HEK293T (cell line): ENCODE measurements at regions of chr3 and their contacts with region 1.

Region 1: DNA sequence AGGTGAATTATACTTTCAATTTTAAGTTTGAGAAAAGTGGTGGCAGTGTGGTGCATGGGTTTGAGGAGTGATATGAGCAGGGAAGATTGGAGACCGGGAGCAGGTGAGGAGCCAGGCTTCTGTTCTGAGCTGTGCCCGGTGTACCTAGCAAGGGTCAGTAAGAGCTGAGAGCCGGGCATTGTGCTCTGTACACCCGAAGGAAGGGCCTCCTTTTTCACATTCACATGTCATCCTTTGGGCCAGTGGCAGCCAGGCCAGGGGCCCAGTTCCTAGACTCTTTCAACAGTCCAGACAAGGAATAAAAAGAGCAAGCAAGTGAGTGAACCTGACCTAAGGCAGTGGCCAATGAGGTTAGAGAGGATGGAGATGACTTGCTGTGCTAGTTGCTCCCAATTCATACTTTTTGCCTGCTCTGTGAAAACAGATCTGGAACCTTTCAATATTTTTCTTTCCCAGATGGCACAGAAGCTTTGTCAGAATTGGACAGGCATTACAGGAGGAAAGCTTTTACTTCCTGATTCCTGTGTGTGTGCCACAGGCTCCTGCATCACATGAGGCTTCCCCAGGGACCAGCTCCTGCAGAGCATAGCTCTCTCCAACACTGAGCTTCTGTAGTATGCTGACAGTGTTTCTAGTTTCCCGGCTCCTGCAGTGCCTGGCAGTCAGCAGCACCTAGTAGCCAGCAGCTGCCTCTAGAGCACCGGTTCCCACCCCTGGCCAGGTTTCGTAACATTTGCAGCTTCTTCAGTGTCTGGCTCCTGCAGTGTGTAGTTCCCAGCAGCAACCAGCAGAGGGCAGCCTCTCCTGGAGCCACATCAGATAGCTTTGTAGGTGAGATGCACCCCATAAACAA is 5.3 kb upstream of the TRA2B start:
- DNase-seq: peak; percentile 66

Region 2: GRCh38 chr3:185585859-185586685 is 357.1 kb before region 1 on chr3 and contains the start of gene SENP2:
- CTCF ChIA-PET with region 1: no interaction called
- POLR2A ChIA-PET with region 1: no interaction called
- DNase-seq: peak; percentile 89

Region 3: DNA sequence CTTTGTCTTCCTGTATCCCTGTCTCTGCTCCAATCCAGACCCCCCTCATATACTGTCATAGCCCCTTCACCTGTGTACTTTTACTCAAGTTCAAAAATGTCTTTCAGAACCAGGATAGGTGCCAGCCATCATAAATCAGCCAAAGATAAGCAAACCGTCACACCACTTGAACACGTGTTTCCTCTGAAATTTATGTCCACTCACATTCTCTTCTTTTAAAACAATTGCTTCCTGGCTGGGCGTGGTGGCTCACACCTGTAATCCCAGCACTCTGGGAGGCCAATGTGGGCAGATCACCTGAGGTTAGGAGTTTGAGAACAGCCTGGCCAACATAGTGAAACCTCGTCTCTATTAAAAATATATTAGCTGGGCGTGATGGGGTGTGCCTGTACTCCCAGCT is 192.4 kb before region 1 on chr3:
- CTCF ChIA-PET with region 1: no interaction called
- POLR2A ChIA-PET with region 1: no interaction called
- DNase-seq: no peak

Region 4: GRCh38 chr3:185928496-185928895 is 14.6 kb before region 1 on chr3:
- CTCF ChIA-PET with region 1: interaction called, 11 read pairs
- POLR2A ChIA-PET with region 1: interaction called, 27 read pairs
- DNase-seq: no peak

Region 5: GRCh38 chr3:185956244-185956643 is 13.1 kb after region 1 on chr3:
- CTCF ChIA-PET with region 1: interaction called, 34 read pairs
- POLR2A ChIA-PET with region 1: interaction called, 3 read pairs
- DNase-seq: no peak

Region 6: GRCh38 chr3:185968168-185968567 is 25.0 kb after region 1 on chr3:
- CTCF ChIA-PET with region 1: interaction called, 10 read pairs
- POLR2A ChIA-PET with region 1: interaction called, 5 read pairs
- DNase-seq: no peak

Region 7: GRCh38 chr3:185983495-185984141 is 40.5 kb after region 1 on chr3:
- CTCF ChIA-PET with region 1: no interaction called
- POLR2A ChIA-PET with region 1: no interaction called
- DNase-seq: peak; percentile 77

Region 8: DNA sequence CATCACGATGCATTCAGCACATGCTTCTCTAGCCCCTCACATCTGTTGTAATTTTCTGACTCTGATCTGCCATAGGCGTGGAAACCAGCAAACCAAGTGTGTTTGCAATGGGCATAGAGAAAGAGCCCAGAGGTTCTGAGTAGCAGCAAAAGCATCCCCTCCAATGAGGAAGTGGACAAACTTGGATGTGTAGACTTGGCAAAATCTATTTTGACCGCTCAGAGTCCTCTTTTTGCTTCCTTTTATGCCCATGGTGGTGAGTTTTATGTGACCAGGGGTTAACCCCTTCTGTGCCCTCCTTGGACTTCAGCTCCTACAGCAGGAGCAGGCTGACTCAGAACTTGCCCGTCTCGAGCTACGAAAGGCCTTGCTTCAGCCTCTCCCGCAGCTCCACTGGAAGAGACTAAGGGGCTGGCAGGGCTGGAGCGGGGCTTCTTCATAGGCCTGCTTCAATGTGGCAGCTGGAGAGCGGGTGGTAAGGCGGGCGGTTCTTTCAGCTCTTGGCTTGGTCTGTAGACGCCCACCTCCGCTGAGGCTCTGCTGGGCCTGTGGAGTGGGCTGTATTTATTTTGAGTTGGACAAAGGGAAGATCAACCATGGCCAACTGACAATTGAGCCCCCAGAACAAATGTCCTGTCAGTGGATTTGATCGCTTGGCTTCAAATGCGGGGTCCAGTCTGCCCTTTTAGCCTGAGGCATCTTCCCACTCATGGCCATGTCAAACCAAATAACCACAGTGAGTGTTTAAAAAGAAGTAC is 172.3 kb after region 1 on chr3:
- CTCF ChIA-PET with region 1: no interaction called
- POLR2A ChIA-PET with region 1: no interaction called
- DNase-seq: no peak